PC-9 (cell line): ENCODE measurements at regions of chr11 and their contacts with region 1.

Region 1: GRCh38 chr11:19938169-19938856 is 222.0 kb downstream of the DBX1 start:
- DNase-seq: peak in 1 of 2 experiments; percentile 45
- H3K4me3 ChIP-seq: no peak overlapping the region
- H3K27ac ChIP-seq: peak overlapping the region; percentile 56
- H3K4me1 ChIP-seq: peaks cover 29% of the 10 kb centered on the region
- H3K27me3 ChIP-seq: no peaks in the 10 kb centered on the region
- CTCF ChIP-seq: peak; percentile 85

Region 2: GRCh38 chr11:19924311-19924710 is 14.0 kb before region 1 on chr11:
- CTCF ChIA-PET with region 1: interaction called, 14 read pairs
- POLR2A ChIA-PET with region 1: interaction called, 5 read pairs
- intact Hi-C with region 1: no loop called
- DNase-seq: no peak
- H3K4me3 ChIP-seq: no peak overlapping the region
- H3K27ac ChIP-seq: no peak overlapping the region
- H3K4me1 ChIP-seq: peaks cover 45% of the 10 kb centered on the region
- H3K27me3 ChIP-seq: no peaks in the 10 kb centered on the region
- CTCF ChIP-seq: no peak

Region 3: DNA sequence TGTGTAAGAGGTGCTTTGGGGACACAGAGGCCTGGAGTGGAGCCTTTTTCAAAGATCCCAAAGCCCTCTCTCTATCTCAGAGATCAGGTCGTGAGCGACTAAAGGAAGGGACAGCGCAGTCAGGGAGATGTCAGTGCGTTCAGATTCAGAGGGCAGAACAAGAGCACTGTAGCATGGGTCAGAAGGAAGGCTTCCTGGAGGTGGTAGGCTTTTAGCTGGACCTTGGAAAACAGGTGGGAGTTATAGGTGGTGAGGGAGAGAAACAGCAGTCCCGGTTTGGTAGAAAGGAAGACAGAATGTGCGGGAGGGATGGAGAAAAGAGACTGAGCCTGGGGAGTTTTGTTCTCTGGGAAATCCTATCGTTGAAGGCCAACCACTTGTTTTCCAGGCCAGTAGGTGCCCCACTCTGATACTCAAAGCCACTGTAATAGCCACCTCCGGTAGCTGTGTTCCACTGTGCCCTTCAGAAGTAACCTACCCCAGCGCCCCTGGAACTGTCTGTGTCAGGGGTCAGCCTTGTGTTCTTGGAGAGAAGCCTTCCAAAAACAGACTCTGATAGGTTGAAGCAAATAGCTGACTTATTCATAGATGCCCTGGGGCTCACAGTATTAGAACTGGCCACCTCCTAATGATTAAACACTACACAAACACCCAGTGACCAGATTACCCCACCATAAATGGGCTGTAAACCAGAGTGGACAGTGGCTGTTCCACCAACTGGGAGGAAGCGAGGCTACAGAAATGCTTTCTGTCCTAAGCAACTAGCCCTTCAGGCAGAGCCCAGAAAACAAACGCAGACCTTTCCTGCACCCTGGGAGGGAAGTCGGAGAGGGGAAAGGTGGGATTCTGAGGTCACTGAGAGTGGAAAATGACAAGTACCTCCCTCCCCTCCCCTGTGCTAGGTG is 64.3 kb after region 1 on chr11:
- CTCF ChIA-PET with region 1: no interaction called
- POLR2A ChIA-PET with region 1: no interaction called
- intact Hi-C with region 1: no loop called
- DNase-seq: peak in 1 of 2 experiments; percentile 76
- H3K4me3 ChIP-seq: no peak overlapping the region
- H3K27ac ChIP-seq: peak overlapping the region; percentile 78
- H3K4me1 ChIP-seq: peaks cover 29% of the 10 kb centered on the region
- H3K27me3 ChIP-seq: no peaks in the 10 kb centered on the region
- CTCF ChIP-seq: no peak

Region 4: GRCh38 chr11:20110908-20111669 is 172.8 kb after region 1 on chr11:
- CTCF ChIA-PET with region 1: no interaction called
- POLR2A ChIA-PET with region 1: interaction called, 14 read pairs
- intact Hi-C with region 1: no loop called
- DNase-seq: peak; percentile 58 to 62
- H3K4me3 ChIP-seq: no peak overlapping the region
- H3K27ac ChIP-seq: 0 out of 2 replicates have a peak overlapping the region, but pooled peaks have one; percentile 51
- H3K4me1 ChIP-seq: peaks cover 22% of the 10 kb centered on the region
- H3K27me3 ChIP-seq: no peaks in the 10 kb centered on the region
- CTCF ChIP-seq: peak; percentile 96